H1 (cell line): ENCODE measurements at regions of chr22 and their contacts with region 1.

Region 1: GRCh38 chr22:37260901-37261336 is 16.9 kb upstream of the RAC2 start:
- DNase-seq: peak in 1 of 2 experiments; percentile 78
- H3K4me3 ChIP-seq: no peak overlapping the region
- H3K27ac ChIP-seq: no peak overlapping the region
- H3K4me1 ChIP-seq: peaks cover 4 to 12% (median 5%) of the 10 kb centered on the region in 4 experiments
- H3K27me3 ChIP-seq: peaks cover 0 to 12% (median 7%) of the 10 kb centered on the region in 4 experiments; a peak in 2 of 7 replicates
- CTCF ChIP-seq: peak; percentile 85 to 95 (median 93)
- EP300 ChIP-seq: no peak
- POLR2A ChIP-seq: no peak
- RAD21 ChIP-seq: peak; percentile 62 to 75; a peak in 3 of 4 replicates

Region 2: DNA sequence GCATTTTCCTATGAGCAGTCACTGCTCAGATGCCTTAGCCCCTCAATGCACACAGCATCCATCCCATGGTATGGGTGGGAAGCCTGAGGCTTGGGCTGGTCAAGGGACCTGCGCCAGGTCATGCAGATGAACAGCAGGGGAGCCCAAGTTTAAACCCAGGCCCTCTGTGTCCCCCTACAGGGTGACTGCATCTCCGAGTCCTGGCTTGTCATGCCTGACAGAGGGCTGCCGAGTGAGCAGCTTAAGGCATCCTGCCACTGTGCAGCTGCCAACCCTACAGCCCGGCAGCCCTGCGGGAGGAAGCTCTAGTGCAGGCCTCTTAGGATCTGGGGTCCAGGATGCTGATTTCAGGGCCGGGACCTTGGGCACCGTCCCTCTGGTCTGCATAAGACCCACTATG is 121.2 kb before region 1 on chr22:
- CTCF ChIA-PET with region 1: no interaction called
- POLR2A ChIA-PET with region 1: no interaction called
- DNase-seq: no peak
- H3K4me3 ChIP-seq: no peak overlapping the region
- H3K27ac ChIP-seq: no peak overlapping the region
- H3K4me1 ChIP-seq: no peaks in the 10 kb centered on the region; a peak in 1 of 7 replicates
- H3K27me3 ChIP-seq: no peaks in the 10 kb centered on the region; a peak in 1 of 7 replicates
- CTCF ChIP-seq: peak in 1 of 3 experiments; percentile 13; a peak in 2 of 4 replicates
- EP300 ChIP-seq: no peak
- POLR2A ChIP-seq: no peak
- RAD21 ChIP-seq: peak in 1 of 2 experiments; percentile 27; a peak in 2 of 4 replicates

Region 3: DNA sequence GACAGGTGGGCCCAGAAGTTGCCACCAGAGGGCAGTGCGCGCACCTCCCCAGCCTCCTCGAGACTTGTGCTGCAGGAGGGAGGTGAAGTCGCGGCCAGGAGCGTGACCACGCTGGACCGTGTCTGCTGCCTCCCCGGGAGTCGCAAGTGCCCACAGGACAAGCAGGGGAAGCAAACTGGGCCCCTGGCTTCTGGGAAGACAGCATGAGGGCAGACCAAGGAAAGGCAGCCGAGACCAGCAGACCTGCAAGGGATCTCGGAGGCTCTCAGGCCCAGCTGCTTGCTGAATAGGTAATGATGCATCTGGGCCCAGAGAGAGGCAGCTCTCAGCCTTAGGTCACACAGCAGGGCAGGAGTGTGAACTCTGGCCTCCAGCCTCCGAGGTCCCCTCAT is 94.2 kb before region 1 on chr22:
- CTCF ChIA-PET with region 1: interaction called, 25 read pairs
- POLR2A ChIA-PET with region 1: no interaction called
- DNase-seq: peak in 1 of 2 experiments; percentile 90
- H3K4me3 ChIP-seq: peak overlapping the region in 1 of 4 experiments; percentile 17; a peak in 1 of 8 replicates
- H3K27ac ChIP-seq: no peak overlapping the region
- H3K4me1 ChIP-seq: peaks cover 0 to 11% (median 2%) of the 10 kb centered on the region in 4 experiments; a peak in 4 of 7 replicates
- H3K27me3 ChIP-seq: no peaks in the 10 kb centered on the region; a peak in 1 of 7 replicates
- CTCF ChIP-seq: peak; percentile 87 to 94 (median 92)
- EP300 ChIP-seq: no peak
- POLR2A ChIP-seq: no peak
- RAD21 ChIP-seq: peak; percentile 71 to 83

Region 4: DNA sequence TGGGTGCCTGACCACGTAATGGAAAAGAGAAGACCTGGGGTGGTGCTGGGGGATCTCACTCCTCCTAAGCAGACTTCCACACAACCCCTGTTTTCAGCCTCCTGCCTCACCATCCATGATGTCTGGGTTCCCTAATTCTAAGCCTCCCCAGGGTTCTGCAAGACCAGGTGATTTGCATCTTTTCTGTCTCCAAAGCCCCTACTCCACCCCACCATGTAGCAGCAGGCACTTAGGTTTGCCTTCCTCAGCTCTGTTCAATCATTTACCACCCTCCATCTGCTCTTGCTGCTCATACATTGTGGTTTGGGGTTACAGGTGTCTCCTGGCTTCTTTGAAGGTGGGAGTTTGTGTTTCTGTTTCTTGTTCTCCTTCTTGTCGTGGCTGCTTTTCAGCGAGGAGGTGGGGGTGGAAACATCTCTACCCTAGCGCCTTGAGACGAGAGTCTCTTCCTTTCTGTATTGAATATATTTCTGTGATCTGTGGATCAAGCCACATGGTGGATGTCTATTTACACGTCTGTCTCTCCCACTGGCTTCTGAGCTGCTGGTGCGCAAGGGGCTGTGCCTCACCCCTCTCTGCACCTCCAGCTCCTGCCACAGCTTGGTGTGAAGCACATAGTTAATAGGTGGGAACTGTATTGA is 42.0 kb before region 1 on chr22:
- CTCF ChIA-PET with region 1: interaction called, 26 read pairs
- POLR2A ChIA-PET with region 1: no interaction called
- DNase-seq: no peak
- H3K4me3 ChIP-seq: no peak overlapping the region
- H3K27ac ChIP-seq: no peak overlapping the region
- H3K4me1 ChIP-seq: no peaks in the 10 kb centered on the region
- H3K27me3 ChIP-seq: peaks cover 0 to 1% (median 0%) of the 10 kb centered on the region in 4 experiments; a peak in 3 of 7 replicates
- CTCF ChIP-seq: no peak
- EP300 ChIP-seq: no peak
- POLR2A ChIP-seq: no peak
- RAD21 ChIP-seq: no peak

Region 5: DNA sequence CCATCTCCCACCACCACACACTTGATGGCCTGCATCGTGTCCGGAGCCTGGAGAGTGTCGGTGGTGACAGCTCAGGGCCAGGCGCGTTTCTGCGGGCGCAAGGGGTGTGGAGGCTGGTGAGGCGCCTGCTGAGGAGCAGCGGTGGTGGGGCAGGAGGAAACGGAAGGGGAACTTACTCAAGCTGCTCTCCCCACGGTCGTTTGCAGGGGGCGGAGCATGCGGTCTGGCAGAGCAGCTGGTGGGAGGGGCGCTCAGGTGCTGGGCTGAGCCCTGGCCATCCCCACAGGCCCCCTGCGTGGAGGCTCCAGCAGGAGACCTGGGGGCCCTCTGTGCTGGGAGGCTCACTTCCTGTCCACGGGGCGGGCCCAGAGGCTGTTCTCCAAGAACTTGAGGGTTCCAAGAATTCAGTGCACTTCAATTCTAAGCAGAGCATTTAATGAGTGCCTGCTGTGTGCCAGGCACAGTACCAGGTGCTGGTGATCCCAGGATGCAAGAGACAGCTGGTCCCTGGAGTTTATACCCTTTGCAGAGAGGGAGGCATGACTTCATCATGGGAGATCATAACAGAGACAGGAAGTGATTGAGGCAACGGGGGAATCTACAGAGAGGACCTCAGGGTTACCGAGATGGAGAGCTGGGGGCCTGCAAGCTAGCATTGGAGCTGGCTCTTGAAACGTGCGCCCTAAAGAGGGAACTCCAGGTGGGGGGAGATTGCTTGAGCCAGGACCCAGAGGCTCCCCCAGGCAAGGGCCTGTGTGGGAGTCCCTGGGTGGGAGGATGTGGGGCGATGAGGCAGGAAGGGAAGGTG is 16.6 kb before region 1 on chr22 and contains the start of gene RAC2:
- CTCF ChIA-PET with region 1: interaction called, 97 read pairs
- POLR2A ChIA-PET with region 1: interaction called, 3 read pairs
- DNase-seq: no peak
- H3K4me3 ChIP-seq: no peak within 1 kb of the TSS
- H3K27ac ChIP-seq: no peak within 1 kb of the TSS
- H3K4me1 ChIP-seq: peaks cover 0 to 13% (median 6%) of the 10 kb centered on the region in 4 experiments; a peak in 6 of 7 replicates
- H3K27me3 ChIP-seq: no peaks in the 10 kb centered on the region
- CTCF ChIP-seq: no peak
- EP300 ChIP-seq: no peak
- POLR2A ChIP-seq: no peak
- RAD21 ChIP-seq: no peak
- total RNA-seq, gene RAC2: 2.1 and 2.3 TPM in 2 replicates

Region 6: DNA sequence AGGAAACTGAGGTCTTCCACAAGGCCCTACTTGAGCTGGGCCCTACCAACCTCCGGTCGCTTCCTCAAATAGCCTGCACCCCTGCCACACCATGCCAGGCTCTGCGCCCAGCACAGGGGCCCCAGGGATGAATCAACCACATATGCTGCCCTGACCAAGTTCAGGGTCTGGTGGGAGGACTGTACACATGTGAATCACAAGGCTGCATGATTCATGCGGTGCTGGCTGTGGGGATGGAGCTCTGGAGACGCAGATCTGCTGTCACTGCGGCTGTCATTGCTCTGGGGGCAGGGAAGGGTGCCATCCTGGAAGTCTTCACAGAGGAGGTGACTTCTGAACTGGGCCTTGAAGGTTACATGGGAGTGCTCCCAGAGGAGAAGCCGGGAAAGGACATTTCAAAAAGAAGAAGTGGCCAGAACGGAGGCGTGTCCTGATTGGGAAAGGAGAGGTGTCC is 42.9 kb after region 1 on chr22:
- CTCF ChIA-PET with region 1: interaction called, 11 read pairs
- POLR2A ChIA-PET with region 1: no interaction called
- DNase-seq: no peak
- H3K4me3 ChIP-seq: no peak overlapping the region
- H3K27ac ChIP-seq: no peak overlapping the region
- H3K4me1 ChIP-seq: peaks cover 6 to 30% (median 16%) of the 10 kb centered on the region in 4 experiments
- H3K27me3 ChIP-seq: peaks cover 0 to 13% (median 3%) of the 10 kb centered on the region in 4 experiments; a peak in 3 of 7 replicates
- CTCF ChIP-seq: no peak
- EP300 ChIP-seq: no peak
- POLR2A ChIP-seq: no peak
- RAD21 ChIP-seq: no peak

Region 7: DNA sequence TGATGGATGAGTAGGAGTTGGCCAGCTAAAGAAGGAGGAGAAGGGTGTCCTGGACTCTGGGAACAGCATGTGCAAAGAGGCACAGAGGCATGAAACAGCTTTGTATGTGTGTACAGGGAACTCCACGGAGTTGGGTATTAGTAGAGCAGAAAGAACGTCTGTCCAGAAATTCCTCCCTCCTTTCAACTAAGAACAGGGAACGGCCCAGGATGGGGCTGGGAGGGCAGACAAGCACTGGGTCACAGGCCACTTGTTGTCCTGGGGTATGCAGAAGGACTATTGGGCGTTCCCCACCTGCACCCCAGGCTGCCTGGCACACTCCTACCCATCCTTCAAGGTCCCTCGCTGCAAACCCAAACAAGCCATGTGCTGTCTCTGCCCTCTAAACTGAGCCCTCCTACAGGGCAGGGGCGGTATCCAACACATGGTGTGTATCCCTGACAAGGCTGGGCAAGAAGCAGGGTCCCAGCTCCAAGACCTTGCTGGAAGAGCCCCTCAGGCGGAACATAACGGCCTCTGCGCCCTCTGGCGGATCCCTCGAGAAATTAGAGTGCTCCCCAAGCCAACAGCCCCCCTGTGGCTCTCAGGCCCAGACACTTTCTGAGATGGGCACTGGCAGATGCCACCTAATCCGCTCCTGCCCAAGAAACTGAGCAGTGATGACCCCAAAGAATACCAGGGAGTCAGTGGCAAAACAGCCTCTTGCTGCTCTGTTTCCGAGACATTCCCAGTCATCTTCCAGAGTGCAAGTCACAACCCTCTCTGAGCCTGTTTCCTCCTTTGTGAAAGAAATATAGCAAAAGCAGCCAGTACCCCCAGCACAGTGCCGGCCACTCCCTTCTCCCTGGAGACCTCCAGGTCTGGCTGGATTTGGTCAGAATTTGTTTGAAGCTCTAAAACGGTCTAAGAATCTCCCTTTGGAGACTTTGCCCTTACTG is 168.0 kb after region 1 on chr22:
- CTCF ChIA-PET with region 1: interaction called, 16 read pairs
- POLR2A ChIA-PET with region 1: no interaction called
- DNase-seq: peak; percentile 56 to 83
- H3K4me3 ChIP-seq: no peak overlapping the region
- H3K27ac ChIP-seq: no peak overlapping the region
- H3K4me1 ChIP-seq: peaks cover 0 to 24% (median 16%) of the 10 kb centered on the region in 4 experiments; a peak in 6 of 7 replicates
- H3K27me3 ChIP-seq: peaks cover 29 to 43% (median 38%) of the 10 kb centered on the region in 4 experiments
- CTCF ChIP-seq: peak; percentile 73 to 92 (median 90)
- EP300 ChIP-seq: no peak
- POLR2A ChIP-seq: no peak
- RAD21 ChIP-seq: peak; percentile 80 to 84

Region 8: DNA sequence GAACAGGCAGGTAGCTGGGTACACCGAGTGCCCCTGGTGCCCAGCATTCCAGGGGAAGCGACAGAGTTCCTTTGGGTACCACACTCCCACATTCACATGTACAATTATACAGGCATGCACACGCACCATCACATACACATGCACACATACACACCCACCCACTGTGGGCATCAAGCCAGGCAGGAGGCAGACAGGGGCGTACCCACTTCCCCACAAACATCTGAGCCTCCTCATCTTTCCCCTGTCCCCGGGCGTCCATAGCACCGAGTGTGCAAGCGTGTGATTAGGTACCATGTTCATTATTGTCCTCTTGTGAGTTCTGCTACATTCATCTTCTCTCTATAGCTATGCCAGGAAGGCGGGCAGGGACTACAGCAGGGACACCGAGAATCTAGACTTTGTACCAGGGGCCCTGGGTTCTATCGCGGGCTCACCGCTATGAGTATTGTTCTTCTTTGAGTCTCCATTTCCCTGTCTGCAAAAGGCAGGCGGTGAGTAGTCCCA is 260.4 kb after region 1 on chr22:
- CTCF ChIA-PET with region 1: no interaction called
- POLR2A ChIA-PET with region 1: no interaction called
- DNase-seq: no peak
- H3K4me3 ChIP-seq: no peak overlapping the region
- H3K27ac ChIP-seq: no peak overlapping the region
- H3K4me1 ChIP-seq: peaks cover 0 to 7% (median 4%) of the 10 kb centered on the region in 4 experiments; a peak in 3 of 7 replicates
- H3K27me3 ChIP-seq: peaks cover 7 to 25% (median 16%) of the 10 kb centered on the region in 4 experiments; a peak in 6 of 7 replicates
- CTCF ChIP-seq: no peak
- EP300 ChIP-seq: no peak
- POLR2A ChIP-seq: no peak
- RAD21 ChIP-seq: no peak